H1 (cell line): ENCODE measurements at regions of chr5 and their contacts with region 1.

Region 1: DNA sequence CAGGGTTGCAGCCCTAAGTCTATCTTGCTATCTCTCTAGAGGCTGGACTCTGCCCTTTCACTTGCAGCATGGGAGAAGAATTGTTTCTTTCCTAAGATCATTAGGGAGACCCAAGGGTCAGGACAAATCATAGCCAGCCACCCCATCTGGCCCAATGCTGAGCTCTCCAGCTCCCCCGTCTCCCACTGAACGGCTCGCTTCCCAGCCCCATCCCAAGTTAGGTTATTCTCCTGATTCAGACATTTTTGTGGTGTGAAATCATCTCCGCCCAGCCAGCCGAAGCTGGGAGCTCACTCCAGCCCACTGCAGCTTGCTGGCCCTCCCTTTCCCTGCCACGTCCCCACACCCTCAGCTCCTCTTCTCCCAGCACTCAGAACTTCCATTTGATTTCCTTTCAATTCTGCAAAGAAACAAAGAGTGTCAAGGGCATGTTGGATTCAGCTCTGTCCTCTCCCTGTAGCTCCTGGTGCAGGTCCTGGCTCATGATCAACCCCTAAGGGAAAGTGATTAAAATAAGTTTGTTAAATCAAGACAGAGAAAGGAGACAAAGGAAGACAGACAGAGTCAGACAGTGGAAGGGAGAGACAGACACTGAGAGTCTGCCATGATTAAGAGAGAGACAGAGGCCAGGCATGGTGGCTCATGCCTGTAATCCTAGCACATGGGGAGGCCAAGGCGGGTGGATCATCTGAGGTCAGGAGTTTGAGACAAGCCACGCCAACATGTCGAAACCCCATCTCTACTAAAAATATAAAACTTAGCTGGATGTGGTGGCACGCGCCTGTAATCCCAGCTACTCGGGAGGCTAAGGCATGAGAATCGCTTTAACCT is 12.6 kb upstream of the SPARC start:
- DNase-seq: no peak
- H3K4me3 ChIP-seq: no peak overlapping the region
- H3K27ac ChIP-seq: no peak overlapping the region
- H3K4me1 ChIP-seq: peaks cover 3 to 14% (median 6%) of the 10 kb centered on the region in 4 experiments
- H3K27me3 ChIP-seq: no peaks in the 10 kb centered on the region
- CTCF ChIP-seq: no peak
- EP300 ChIP-seq: no peak
- POLR2A ChIP-seq: no peak
- RAD21 ChIP-seq: no peak

Region 2: GRCh38 chr5:151686674-151687407 is 12.4 kb before region 1 on chr5 and contains the start of gene SPARC:
- CTCF ChIA-PET with region 1: interaction called, 53 read pairs
- POLR2A ChIA-PET with region 1: interaction called, 13 read pairs
- DNase-seq: peak; percentile 56 to 77
- H3K4me3 ChIP-seq: peak within 1 kb of the TSS; percentile 64 to 79 (median 72)
- H3K27ac ChIP-seq: no peak within 1 kb of the TSS
- H3K4me1 ChIP-seq: peaks cover 3 to 23% (median 15%) of the 10 kb centered on the region in 4 experiments
- H3K27me3 ChIP-seq: no peaks in the 10 kb centered on the region
- CTCF ChIP-seq: no peak
- EP300 ChIP-seq: no peak
- POLR2A ChIP-seq: peak; percentile 27 to 94
- RAD21 ChIP-seq: no peak; a peak in 1 of 4 replicates
- total RNA-seq, gene SPARC: 438 and 452 TPM in 2 replicates

Region 3: GRCh38 chr5:151733358-151734063 is 34.2 kb after region 1 on chr5:
- CTCF ChIA-PET with region 1: interaction called, 12 read pairs
- POLR2A ChIA-PET with region 1: interaction called, 14 read pairs
- DNase-seq: no peak
- H3K4me3 ChIP-seq: no peak overlapping the region
- H3K27ac ChIP-seq: no peak overlapping the region
- H3K4me1 ChIP-seq: peaks cover 0 to 7% (median 3%) of the 10 kb centered on the region in 4 experiments; a peak in 3 of 7 replicates
- H3K27me3 ChIP-seq: no peaks in the 10 kb centered on the region
- CTCF ChIP-seq: no peak
- EP300 ChIP-seq: no peak
- POLR2A ChIP-seq: no peak
- RAD21 ChIP-seq: no peak